Natural killer cell (primary cell): ENCODE measurements at regions of chr4 and their contacts with region 1.

Region 1: DNA sequence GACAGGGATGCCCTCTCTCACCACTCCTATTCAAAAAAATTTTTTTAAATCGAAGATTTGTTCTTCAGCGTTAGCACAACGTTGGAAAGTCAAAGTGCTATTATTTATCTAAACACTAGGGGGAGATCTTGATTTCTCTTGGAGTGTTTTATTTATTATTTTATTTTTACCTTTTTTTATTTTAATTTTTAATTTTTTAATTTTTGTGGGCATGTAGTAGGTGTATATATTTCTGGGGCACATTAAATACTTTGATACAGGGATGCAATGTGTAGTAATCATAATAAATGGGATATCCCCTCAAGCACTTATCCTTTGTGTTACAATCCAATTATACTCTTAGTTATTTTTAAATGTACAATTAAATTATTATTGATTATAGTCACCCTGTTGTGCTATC is 37.4 kb upstream of the SLC10A4 start:
- DNase-seq: peak in 1 of 2 donors; percentile 28
- ATAC-seq: no peak
- H3K4me3 ChIP-seq: no peak overlapping the region
- H3K4me3 Mint-ChIP-seq: no peak overlapping the region
- H3K27ac ChIP-seq: no peak overlapping the region
- H3K27ac Mint-ChIP-seq: no peak overlapping the region
- H3K4me1 ChIP-seq: no peaks in the 10 kb centered on the region
- H3K4me1 Mint-ChIP-seq: no peaks in the 10 kb centered on the region
- H3K27me3 ChIP-seq: no peaks in the 10 kb centered on the region
- H3K27me3 Mint-ChIP-seq: peaks cover 0 to 7% of the 10 kb centered on the region in 2 donors
- CTCF ChIP-seq: peak; percentile 72

Region 2: DNA sequence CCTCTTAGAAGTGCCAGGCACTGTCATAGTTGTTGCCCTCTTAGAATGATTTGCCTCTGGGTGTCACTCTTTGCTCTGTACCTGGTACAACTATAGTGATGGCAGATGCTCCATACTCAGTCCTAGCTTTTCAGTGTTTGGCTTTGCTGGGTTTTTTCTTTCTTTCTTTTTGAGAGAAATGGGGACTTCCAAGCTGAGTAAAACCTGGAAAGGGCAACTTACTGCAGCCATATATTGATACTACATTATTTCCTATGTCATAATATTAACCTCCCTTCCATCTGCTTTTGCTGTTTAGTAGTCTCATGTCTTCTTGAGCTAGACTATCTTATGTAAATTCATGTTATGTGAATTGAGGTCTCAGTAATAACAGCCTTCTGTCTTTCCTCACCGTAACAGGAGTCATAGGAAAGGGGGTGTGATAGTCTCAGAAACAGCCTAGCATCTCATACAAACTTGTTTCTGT is 380.1 kb before region 1 on chr4:
- intact Hi-C with region 1: no loop called
- DNase-seq: no peak
- ATAC-seq: no peak
- H3K4me3 ChIP-seq: no peak overlapping the region
- H3K4me3 Mint-ChIP-seq: no peak overlapping the region
- H3K27ac ChIP-seq: no peak overlapping the region
- H3K27ac Mint-ChIP-seq: peak overlapping the region; percentile 11 to 42
- H3K4me1 ChIP-seq: peaks cover 4% of the 10 kb centered on the region
- H3K4me1 Mint-ChIP-seq: peaks cover 45 to 58% of the 10 kb centered on the region in 2 donors
- H3K27me3 ChIP-seq: no peaks in the 10 kb centered on the region
- H3K27me3 Mint-ChIP-seq: no peaks in the 10 kb centered on the region
- CTCF ChIP-seq: no peak

Region 3: GRCh38 chr4:48963042-48963679 is 517.5 kb after region 1 on chr4:
- intact Hi-C with region 1: loop called (anchors 5 kb)
- DNase-seq: peak; percentile 46 to 90
- ATAC-seq: peak; percentile 93 to 99 (median 99)
- H3K4me3 ChIP-seq: no peak overlapping the region
- H3K4me3 Mint-ChIP-seq: no peak overlapping the region
- H3K27ac ChIP-seq: no peak overlapping the region
- H3K27ac Mint-ChIP-seq: no peak overlapping the region
- H3K4me1 ChIP-seq: no peaks in the 10 kb centered on the region
- H3K4me1 Mint-ChIP-seq: no peaks in the 10 kb centered on the region
- H3K27me3 ChIP-seq: no peaks in the 10 kb centered on the region
- H3K27me3 Mint-ChIP-seq: peaks cover 5 to 12% of the 10 kb centered on the region in 2 donors
- CTCF ChIP-seq: peak; percentile 98